ENCODE measurements at regions of chr9 and their contacts with region 1.

Region 1: DNA sequence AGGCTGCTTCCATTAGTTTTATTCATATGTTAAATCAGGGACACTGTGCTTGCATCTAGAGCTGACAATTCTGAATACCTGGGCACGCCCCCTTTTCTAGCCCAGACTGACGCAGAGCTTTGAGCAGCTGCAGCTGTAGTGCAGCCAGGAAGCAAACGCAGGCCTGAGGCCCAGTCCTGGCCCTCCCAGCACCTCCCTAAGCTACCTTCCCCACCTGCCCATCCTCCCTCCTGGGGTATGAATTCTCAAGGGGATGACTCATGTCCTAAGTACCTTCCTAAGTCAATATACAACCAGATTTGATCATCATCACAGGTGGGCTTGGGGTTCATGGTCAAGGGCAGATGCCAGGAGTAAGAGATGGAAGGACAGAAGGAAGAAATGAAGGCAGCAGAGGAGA is 3.5 kb downstream of the PHF19 start:
- DNase-seq: peak in 2 of 4 donors; percentile 70 to 80
- ATAC-seq: peak; percentile 9
- H3K4me3 ChIP-seq: no peak overlapping the region
- H3K27ac ChIP-seq: peak overlapping the region in 1 of 2 donors; percentile 28
- H3K4me1 ChIP-seq: peaks cover 2 to 44% of the 10 kb centered on the region in 2 donors
- H3K27me3 ChIP-seq: no peaks in the 10 kb centered on the region
- CTCF ChIP-seq: no peak

Region 2: DNA sequence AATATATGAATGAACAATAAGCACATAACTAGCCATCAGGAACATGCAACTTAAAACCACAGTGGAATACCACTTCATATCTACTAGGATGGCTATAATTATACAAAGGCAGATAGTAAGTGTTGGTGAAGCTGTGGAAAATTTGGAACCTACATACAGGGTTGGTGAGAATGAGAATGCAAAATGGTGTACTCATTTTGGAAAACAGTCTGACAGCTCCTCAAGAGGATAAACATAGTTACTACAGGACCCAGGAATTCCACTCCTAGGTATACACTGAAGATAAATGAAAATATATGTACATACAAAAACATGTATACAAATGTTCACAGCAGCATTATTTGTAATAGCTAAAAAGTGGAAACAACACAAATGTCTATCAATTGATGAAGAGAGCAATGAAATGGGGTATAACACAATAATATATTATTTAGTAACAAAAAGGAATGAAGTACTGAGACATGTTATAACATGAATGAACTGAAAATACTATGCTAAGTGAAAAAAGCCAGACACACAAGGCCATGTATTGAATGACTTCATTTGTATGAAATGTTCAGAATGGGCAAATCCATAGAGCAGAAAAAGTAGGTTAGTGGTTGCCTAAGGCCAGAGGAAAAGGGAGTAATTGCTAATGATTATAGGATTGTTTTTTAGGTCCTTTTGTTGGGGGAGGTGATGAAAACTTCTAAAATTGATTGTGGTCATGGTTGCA is 262.4 kb before region 1 on chr9:
- intact Hi-C with region 1: no loop called
- DNase-seq: no peak
- ATAC-seq: peak; percentile 22
- H3K4me3 ChIP-seq: no peak overlapping the region
- H3K27ac ChIP-seq: no peak overlapping the region
- H3K4me1 ChIP-seq: no peaks in the 10 kb centered on the region
- H3K27me3 ChIP-seq: no peaks in the 10 kb centered on the region
- CTCF ChIP-seq: no peak

Region 3: DNA sequence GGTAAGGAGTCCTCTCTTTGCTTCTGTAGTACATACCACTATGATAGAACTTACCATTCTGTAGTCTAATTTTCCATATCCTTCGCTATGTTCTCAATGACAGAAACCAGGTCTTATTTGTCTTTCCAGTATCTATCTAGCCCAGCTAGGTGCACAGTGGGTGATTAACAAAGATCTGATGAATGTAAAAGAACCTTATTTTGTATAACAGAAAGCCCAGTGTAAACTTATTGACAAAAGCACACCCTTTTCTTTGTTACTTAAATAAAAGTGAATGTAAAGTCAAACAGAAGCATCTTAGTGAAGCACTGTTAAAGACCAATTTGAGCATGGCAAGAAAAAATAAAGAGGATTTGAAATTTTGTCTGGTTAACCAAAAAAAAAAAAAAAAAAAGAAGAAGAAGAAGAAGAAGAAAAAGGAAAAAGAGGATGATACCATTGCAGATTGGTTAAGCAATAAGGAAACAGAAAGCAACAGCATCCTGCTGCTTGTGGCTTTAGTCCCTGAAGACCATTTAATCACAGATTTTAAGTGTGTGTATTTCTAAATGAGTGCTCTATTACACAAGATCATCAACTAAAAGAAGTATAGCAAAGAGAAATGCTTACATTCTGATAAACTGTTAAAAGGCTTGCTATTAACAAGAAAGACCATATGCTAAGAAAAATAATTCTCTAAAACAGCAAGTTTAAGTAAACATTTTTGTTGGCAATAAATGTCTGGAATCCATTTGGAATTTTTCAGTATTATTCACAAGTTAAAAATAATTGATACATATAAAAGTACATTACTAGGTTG is 180.4 kb before region 1 on chr9:
- intact Hi-C with region 1: no loop called
- DNase-seq: peak in 1 of 4 donors; percentile 54
- ATAC-seq: peak; percentile 58
- H3K4me3 ChIP-seq: no peak overlapping the region
- H3K27ac ChIP-seq: peak overlapping the region in 1 of 2 donors; percentile 72
- H3K4me1 ChIP-seq: peaks cover 3 to 84% of the 10 kb centered on the region in 2 donors
- H3K27me3 ChIP-seq: no peaks in the 10 kb centered on the region
- CTCF ChIP-seq: no peak

Region 4: DNA sequence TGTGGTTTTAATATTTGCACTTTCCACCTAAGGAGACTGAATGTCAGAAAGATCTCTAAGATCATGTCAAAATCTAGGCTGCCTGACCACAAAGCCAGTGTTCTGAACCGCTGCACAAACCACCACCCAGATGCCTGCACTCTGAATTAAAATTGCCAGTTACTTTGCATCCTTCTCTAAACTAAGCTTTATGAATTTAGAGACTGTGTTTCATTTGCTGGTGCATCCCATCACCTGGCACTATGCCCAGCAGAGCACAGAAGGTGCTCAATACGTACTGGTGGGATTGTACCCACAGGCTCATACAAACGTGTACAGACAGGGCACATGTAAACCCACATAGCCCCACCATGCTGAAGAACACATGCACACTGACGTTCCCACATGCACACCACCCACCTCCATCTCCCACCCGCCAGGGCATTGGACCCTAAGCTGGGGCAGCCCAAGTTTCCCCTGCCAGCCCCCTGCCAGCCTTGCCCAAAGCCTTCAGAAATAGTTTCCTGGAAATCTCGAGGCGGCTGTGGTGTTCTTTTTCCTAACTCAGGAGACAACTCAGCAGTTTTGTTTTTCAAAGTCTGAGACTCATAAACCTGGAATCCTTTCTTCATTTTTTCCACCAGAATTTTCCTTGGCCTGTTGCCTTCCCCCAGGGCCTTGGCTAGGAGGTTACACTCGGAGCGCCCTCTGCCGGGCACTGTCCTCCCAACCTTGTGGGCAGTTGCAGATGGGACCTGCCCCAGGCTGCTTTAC is 62.7 kb after region 1 on chr9:
- intact Hi-C with region 1: loop called in 1 of 2 experiments (anchors 5 kb)
- DNase-seq: peak; percentile 82 to 98 (median 93)
- ATAC-seq: peak; percentile 90
- H3K4me3 ChIP-seq: no peak overlapping the region
- H3K27ac ChIP-seq: peak overlapping the region; percentile 77 to 86
- H3K4me1 ChIP-seq: peaks cover 43 to 64% of the 10 kb centered on the region in 2 donors
- H3K27me3 ChIP-seq: no peaks in the 10 kb centered on the region
- CTCF ChIP-seq: peak; percentile 82 to 95

Measured in left lung (tissue), 14 donors.